IMR-90 (cell line): ENCODE measurements at regions of chr3 and their contacts with region 1.

Region 1: DNA sequence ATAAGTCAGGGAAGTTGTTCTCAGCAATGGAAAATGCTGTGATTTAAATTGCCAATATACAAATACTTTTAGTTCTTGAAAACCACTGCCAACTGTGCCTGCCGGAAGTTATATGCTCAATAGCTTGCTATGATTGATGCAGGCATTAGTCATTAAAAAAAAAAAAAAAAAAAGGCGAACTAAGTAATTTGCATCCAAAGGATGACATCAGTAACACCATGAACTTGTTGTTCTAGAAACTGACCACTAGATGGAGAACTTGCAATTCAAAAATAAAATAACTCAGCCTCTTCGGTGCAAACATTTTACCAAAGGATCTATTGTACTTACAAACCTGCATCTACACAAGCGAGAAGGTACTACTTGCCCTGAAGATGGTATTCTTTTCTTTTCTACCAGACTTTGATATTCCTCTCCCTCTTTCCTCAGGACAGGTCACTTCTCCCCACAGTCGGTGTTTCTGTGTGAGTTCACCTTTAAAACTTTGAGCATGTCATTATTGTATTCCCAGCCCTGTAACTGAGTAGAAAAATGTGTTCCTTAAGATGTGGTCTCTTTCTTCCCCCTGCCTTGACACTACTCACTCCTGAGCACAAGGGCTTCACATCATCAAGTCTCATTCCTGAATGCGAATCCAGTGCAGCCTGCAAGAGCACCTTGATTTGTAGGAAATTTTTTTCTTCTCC is 115.0 kb upstream of the VEPH1 start:
- DNase-seq: peak; percentile 71
- ATAC-seq: peak; percentile 86
- H3K4me3 ChIP-seq: no peak overlapping the region
- H3K27ac ChIP-seq: no peak overlapping the region
- H3K4me1 ChIP-seq: no peaks in the 10 kb centered on the region
- H3K27me3 ChIP-seq: peaks cover 12% of the 10 kb centered on the region
- CTCF ChIP-seq: peak; percentile 68
- POLR2A ChIP-seq: no peak
- RAD21 ChIP-seq: peak; percentile 63

Region 2: GRCh38 chr3:157832588-157832987 is 214.4 kb after region 1 on chr3:
- CTCF ChIA-PET with region 1: no interaction called
- POLR2A ChIA-PET with region 1: no interaction called
- dilution Hi-C with region 1: no loop called
- in situ Hi-C with region 1: no loop called
- intact Hi-C with region 1: no loop called
- DNase-seq: no peak
- ATAC-seq: no peak
- H3K4me3 ChIP-seq: no peak overlapping the region
- H3K27ac ChIP-seq: no peak overlapping the region
- H3K4me1 ChIP-seq: no peaks in the 10 kb centered on the region
- H3K27me3 ChIP-seq: peaks cover 4% of the 10 kb centered on the region; the same call in 1 of the 2 replicates
- CTCF ChIP-seq: no peak
- POLR2A ChIP-seq: no peak
- RAD21 ChIP-seq: no peak

Region 3: GRCh38 chr3:157906627-157907026 is 288.4 kb after region 1 on chr3:
- CTCF ChIA-PET with region 1: interaction called, 4 read pairs
- POLR2A ChIA-PET with region 1: no interaction called
- dilution Hi-C with region 1: no loop called
- in situ Hi-C with region 1: no loop called
- intact Hi-C with region 1: loop called (anchors 2 kb)
- DNase-seq: no peak
- ATAC-seq: no peak; the same call in 1 of the 2 replicates
- H3K4me3 ChIP-seq: no peak overlapping the region
- H3K27ac ChIP-seq: no peak overlapping the region
- H3K4me1 ChIP-seq: no peaks in the 10 kb centered on the region
- H3K27me3 ChIP-seq: no peaks in the 10 kb centered on the region
- CTCF ChIP-seq: 0 out of 2 replicates have a peak, but pooled peaks have one; percentile 5
- POLR2A ChIP-seq: no peak
- RAD21 ChIP-seq: peak; percentile 15; the same call in 1 of the 2 replicates

Region 4: GRCh38 chr3:158103887-158104327 is 485.7 kb after region 1 on chr3:
- CTCF ChIA-PET with region 1: no interaction called
- POLR2A ChIA-PET with region 1: no interaction called
- dilution Hi-C with region 1: no loop called
- in situ Hi-C with region 1: no loop called
- intact Hi-C with region 1: loop called (anchors 1 kb)
- DNase-seq: no peak
- ATAC-seq: no peak
- H3K4me3 ChIP-seq: no peak overlapping the region
- H3K27ac ChIP-seq: no peak overlapping the region
- H3K4me1 ChIP-seq: peaks cover 2% of the 10 kb centered on the region; the same call in 1 of the 2 replicates
- H3K27me3 ChIP-seq: peaks cover 70% of the 10 kb centered on the region
- CTCF ChIP-seq: no peak
- POLR2A ChIP-seq: no peak
- RAD21 ChIP-seq: no peak

Region 5: DNA sequence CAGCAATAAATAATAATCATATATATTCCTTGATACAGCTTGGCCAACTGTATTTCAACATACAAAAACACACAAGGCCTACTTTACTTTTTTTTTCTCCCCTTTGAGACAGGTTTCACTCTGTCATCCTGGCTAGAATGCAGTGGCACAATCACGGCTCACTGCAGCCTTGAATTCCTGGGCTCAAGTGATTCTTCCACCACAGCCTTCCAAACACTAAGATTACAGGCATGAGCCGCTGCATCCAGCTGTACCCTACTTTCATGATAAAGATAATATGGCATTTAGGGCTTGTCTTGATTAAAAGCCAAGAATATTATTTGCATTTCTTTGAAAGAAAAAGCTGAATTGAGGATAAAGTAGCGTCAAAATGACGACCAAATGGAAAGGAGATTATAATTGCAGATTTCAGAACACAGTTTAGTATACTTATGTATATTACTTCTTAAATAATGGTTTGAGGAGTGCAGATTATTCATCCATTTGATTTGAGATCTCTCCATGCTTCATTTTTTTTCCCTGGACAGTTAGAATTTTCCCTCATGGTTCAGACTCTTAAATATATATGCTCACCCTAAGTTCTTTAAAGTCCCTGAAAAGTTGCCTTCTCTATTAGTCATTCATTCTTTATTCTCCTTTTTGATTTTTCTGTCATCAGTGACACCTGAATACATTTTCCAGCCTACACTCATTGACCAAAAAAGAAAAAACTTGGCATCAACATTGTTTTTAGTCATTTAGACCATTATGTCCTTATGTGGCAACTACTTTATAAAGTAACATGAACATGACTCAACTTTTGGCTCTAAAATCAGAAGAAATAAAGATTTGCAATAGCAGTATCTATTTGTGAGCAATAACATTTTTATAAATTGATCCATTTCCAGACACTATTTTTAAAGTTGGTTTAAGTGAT is 904.3 kb after region 1 on chr3:
- CTCF ChIA-PET with region 1: no interaction called
- POLR2A ChIA-PET with region 1: no interaction called
- dilution Hi-C with region 1: no loop called
- in situ Hi-C with region 1: loop called (anchors 10 kb)
- intact Hi-C with region 1: no loop called
- DNase-seq: peak; percentile 69
- ATAC-seq: no peak; the same call in 1 of the 2 replicates
- H3K4me3 ChIP-seq: no peak overlapping the region
- H3K27ac ChIP-seq: no peak overlapping the region
- H3K4me1 ChIP-seq: peaks cover 3% of the 10 kb centered on the region
- H3K27me3 ChIP-seq: no peaks in the 10 kb centered on the region
- CTCF ChIP-seq: no peak
- POLR2A ChIP-seq: no peak
- RAD21 ChIP-seq: no peak

Region 6: GRCh38 chr3:158644345-158644908 is 1026.2 kb after region 1 on chr3 and contains the start of gene GFM1:
- CTCF ChIA-PET with region 1: no interaction called
- POLR2A ChIA-PET with region 1: no interaction called
- dilution Hi-C with region 1: no loop called
- in situ Hi-C with region 1: no loop called
- intact Hi-C with region 1: loop called (anchors 5 kb)
- DNase-seq: peak; percentile 94
- ATAC-seq: peak; percentile 99
- H3K4me3 ChIP-seq: peak within 1 kb of the TSS; percentile 81
- H3K27ac ChIP-seq: peak within 1 kb of the TSS; percentile 56
- H3K4me1 ChIP-seq: no peaks in the 10 kb centered on the region
- H3K27me3 ChIP-seq: no peaks in the 10 kb centered on the region
- CTCF ChIP-seq: peak; percentile 96
- POLR2A ChIP-seq: peak; percentile 80; the same call in 1 of the 2 replicates
- RAD21 ChIP-seq: peak; percentile 61
- total RNA-seq, gene GFM1: 36.0 and 55.0 TPM in 2 replicates